PC-9 (cell line): ENCODE measurements at regions of chr4 and their contacts with region 1.

Region 1: DNA sequence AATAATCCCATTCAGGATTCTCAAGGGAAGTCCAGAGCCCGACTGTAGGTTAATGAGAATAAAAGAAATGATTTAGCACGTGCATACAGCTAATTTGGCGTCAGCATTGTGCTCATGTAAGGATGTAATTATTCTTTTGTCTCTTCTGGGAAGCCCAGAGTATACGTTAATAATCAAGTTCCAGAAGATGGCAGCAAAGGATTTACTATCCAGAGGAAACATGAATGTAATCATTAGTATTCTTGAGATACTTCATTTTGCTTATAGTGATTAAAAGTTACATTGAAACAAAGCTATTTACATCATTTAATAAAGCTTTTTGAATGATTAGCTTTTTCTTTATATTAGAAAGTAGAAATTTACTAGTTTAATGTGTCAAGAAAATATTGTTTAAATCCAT is 27.1 kb upstream of the MAP9 start:
- DNase-seq: no peak
- H3K4me3 ChIP-seq: no peak overlapping the region
- H3K27ac ChIP-seq: no peak overlapping the region
- H3K4me1 ChIP-seq: no peaks in the 10 kb centered on the region
- H3K27me3 ChIP-seq: no peaks in the 10 kb centered on the region
- CTCF ChIP-seq: peak; percentile 51

Region 2: DNA sequence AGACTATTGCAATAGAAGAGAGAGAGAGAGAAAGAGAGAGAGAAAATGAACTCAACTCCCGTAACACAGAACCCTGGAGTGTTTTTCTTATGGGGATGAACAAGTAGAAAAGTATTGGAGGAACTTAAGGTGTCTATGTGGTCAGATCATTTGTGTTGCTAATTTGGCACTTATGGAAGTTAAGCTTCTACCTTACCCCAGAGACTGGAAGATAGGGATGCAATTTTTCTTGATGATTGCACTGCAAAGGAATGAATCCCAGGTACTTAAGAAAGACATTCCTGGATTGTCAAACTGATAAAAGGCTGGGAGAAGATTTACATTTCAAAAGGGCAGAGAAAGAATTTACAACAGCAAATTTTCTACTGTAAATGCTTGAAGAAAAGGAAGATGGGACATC is 84.4 kb before region 1 on chr4:
- CTCF ChIA-PET with region 1: no interaction called
- POLR2A ChIA-PET with region 1: no interaction called
- intact Hi-C with region 1: no loop called
- DNase-seq: no peak
- H3K4me3 ChIP-seq: no peak overlapping the region
- H3K27ac ChIP-seq: no peak overlapping the region
- H3K4me1 ChIP-seq: no peaks in the 10 kb centered on the region
- H3K27me3 ChIP-seq: no peaks in the 10 kb centered on the region
- CTCF ChIP-seq: no peak

Region 3: GRCh38 chr4:155419266-155419665 is 15.4 kb after region 1 on chr4:
- CTCF ChIA-PET with region 1: no interaction called
- POLR2A ChIA-PET with region 1: no interaction called
- intact Hi-C with region 1: no loop called
- DNase-seq: no peak
- H3K4me3 ChIP-seq: no peak overlapping the region
- H3K27ac ChIP-seq: no peak overlapping the region
- H3K4me1 ChIP-seq: no peaks in the 10 kb centered on the region
- H3K27me3 ChIP-seq: no peaks in the 10 kb centered on the region
- CTCF ChIP-seq: no peak

Region 4: GRCh38 chr4:155787113-155787710 is 383.3 kb after region 1 on chr4:
- CTCF ChIA-PET with region 1: no interaction called
- POLR2A ChIA-PET with region 1: no interaction called
- intact Hi-C with region 1: loop called (anchors 1 kb)
- DNase-seq: peak in 1 of 2 experiments; percentile 11
- H3K4me3 ChIP-seq: no peak overlapping the region
- H3K27ac ChIP-seq: no peak overlapping the region
- H3K4me1 ChIP-seq: no peaks in the 10 kb centered on the region
- H3K27me3 ChIP-seq: no peaks in the 10 kb centered on the region
- CTCF ChIP-seq: peak; percentile 58

Region 5: DNA sequence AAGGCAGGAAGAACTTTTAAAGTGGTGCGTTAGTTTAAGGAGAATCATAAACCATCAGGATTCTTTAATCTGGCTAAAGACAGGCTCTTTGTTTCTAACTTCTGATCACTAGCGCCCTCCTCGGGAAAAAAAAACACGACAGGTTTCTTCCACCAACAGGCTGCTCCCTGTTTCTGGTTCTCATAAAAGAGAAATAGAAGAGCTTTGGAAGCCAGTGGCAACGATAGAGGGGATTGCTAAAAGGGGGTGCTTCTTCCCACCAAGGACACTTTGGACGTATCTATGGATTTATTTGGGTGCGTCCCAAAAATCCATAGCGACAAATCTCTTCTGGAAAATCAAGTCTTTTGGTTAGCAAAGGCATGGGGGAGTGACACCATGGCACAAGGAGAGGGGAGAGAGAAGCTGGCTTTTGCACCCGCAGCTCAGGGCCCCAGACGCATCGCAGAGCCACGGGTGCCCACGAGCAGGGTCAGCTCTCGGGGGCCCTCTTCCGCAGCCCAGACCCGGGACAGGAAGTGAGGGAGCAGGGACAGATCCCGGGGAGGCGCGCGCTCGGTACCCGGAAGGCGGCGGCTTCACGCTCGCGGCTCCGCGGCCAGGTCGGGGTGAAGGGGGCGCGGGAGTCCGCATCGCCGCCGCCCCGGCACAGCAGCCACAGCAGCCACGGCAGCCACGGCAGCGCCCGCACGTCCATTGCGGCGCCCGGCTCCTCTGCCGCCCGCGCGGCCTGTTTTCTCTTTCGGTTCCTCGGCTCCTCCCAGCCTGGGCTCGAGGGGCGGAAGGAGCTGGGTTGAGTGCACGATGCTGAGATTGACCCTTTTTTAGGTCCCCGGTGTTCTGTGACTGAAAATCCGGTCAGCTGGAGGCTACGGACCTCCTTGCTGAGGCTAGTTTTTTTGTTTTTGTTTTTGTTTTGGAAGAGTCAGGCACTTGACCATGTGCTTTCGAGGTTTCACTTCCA is 549.5 kb after region 1 on chr4 and contains the start of gene CTSO:
- CTCF ChIA-PET with region 1: no interaction called
- POLR2A ChIA-PET with region 1: interaction called, 3 read pairs
- intact Hi-C with region 1: loop called (anchors 1 kb)
- DNase-seq: peak; percentile 44 to 63
- H3K4me3 ChIP-seq: peak within 1 kb of the TSS; percentile 75
- H3K27ac ChIP-seq: peak within 1 kb of the TSS; percentile 55
- H3K4me1 ChIP-seq: no peaks in the 10 kb centered on the region
- H3K27me3 ChIP-seq: no peaks in the 10 kb centered on the region
- CTCF ChIP-seq: peak; percentile 71
- total RNA-seq, gene CTSO: 4.8 and 5.0 TPM in 2 replicates